ENCODE measurements at regions of chr7 and their contacts with region 1.

Region 1: GRCh38 chr7:33091111-33091531 is 18.1 kb downstream of the RP9 start:
- DNase-seq: no peak
- H3K4me3 ChIP-seq: no peak overlapping the region
- H3K27ac ChIP-seq: no peak overlapping the region
- H3K4me1 ChIP-seq: no peaks in the 10 kb centered on the region
- H3K27me3 ChIP-seq: no peaks in the 10 kb centered on the region
- CTCF ChIP-seq: no peak
- EP300 ChIP-seq: no peak
- POLR2A ChIP-seq: no peak
- RAD21 ChIP-seq: no peak

Region 2: GRCh38 chr7:33109005-33109757 is 18.1 kb after region 1 on chr7 and contains the start of gene RP9:
- CTCF ChIA-PET with region 1: interaction called, 12 read pairs
- POLR2A ChIA-PET with region 1: interaction called, 4 read pairs
- DNase-seq: peak in 1 of 2 experiments; percentile 89
- H3K4me3 ChIP-seq: peak within 1 kb of the TSS; percentile 68 to 98 (median 75)
- H3K27ac ChIP-seq: no peak within 1 kb of the TSS; the same call in 1 of the 2 replicates
- H3K4me1 ChIP-seq: peaks cover 0 to 5% (median 1%) of the 10 kb centered on the region in 4 experiments; a peak in 2 of 7 replicates
- H3K27me3 ChIP-seq: peaks cover 0 to 3% (median 0%) of the 10 kb centered on the region in 4 experiments; a peak in 1 of 7 replicates
- CTCF ChIP-seq: peak; percentile 32 to 78 (median 55)
- EP300 ChIP-seq: 0 out of 3 replicates have a peak, but pooled peaks of 1 of the 2 experiments have one; percentile 35
- POLR2A ChIP-seq: no peak
- RAD21 ChIP-seq: peak; percentile 49 to 72; a peak in 3 of 4 replicates
- total RNA-seq, gene RP9: 11.9 and 12.4 TPM in 2 replicates

Region 3: DNA sequence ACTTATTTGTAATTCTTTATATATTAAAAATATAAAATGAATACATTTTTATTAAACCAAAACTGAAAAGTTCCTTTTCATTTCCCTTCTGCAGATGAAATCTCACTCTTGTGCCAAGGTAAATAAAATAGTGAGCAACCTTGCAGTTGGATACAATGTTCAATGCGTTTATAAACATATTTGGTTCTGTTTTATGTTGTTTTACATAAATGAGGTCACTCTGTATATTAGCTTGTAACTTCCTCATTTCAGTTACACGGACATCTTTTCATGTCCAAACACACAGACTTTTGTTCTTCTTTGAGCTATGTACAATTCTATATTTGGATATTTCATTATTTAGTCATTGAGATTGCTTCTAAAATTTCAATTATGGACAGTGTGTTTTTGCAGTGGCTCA is 145.9 kb after region 1 on chr7:
- CTCF ChIA-PET with region 1: no interaction called
- POLR2A ChIA-PET with region 1: no interaction called
- DNase-seq: no peak
- H3K4me3 ChIP-seq: no peak overlapping the region
- H3K27ac ChIP-seq: no peak overlapping the region
- H3K4me1 ChIP-seq: no peaks in the 10 kb centered on the region
- H3K27me3 ChIP-seq: no peaks in the 10 kb centered on the region
- CTCF ChIP-seq: no peak
- EP300 ChIP-seq: no peak
- POLR2A ChIP-seq: no peak
- RAD21 ChIP-seq: no peak